Prostate gland (tissue), 2 donors: ENCODE measurements at regions of chr2 and their contacts with region 1.

Region 1: GRCh38 chr2:114550895-114551793 is 108.7 kb downstream of the DPP10 start:
- DNase-seq: peak; percentile 15
- H3K4me3 ChIP-seq: no peak overlapping the region
- H3K27ac ChIP-seq: no peak overlapping the region
- H3K4me1 ChIP-seq: no peaks in the 10 kb centered on the region
- H3K27me3 ChIP-seq: no peaks in the 10 kb centered on the region
- CTCF ChIP-seq: peak in 3 of 4 experiments; percentile 21 to 48 (median 32)
- POLR2A ChIP-seq: no peak

Region 2: GRCh38 chr2:113977660-113978523 is 573.3 kb before region 1 on chr2:
- intact Hi-C with region 1: loop called (anchors 10 kb)
- DNase-seq: no peak
- H3K4me3 ChIP-seq: no peak overlapping the region
- H3K27ac ChIP-seq: no peak overlapping the region
- H3K4me1 ChIP-seq: no peaks in the 10 kb centered on the region
- H3K27me3 ChIP-seq: no peaks in the 10 kb centered on the region
- CTCF ChIP-seq: peak in 1 of 4 experiments; percentile 22
- POLR2A ChIP-seq: no peak

Region 3: GRCh38 chr2:114405247-114406116 is 145.7 kb before region 1 on chr2:
- intact Hi-C with region 1: no loop called
- DNase-seq: no peak
- H3K4me3 ChIP-seq: no peak overlapping the region
- H3K27ac ChIP-seq: no peak overlapping the region
- H3K4me1 ChIP-seq: no peaks in the 10 kb centered on the region
- H3K27me3 ChIP-seq: no peaks in the 10 kb centered on the region
- CTCF ChIP-seq: no peak
- POLR2A ChIP-seq: no peak

Region 4: GRCh38 chr2:114488841-114489530 is 62.2 kb before region 1 on chr2:
- intact Hi-C with region 1: no loop called
- DNase-seq: no peak
- H3K4me3 ChIP-seq: no peak overlapping the region
- H3K27ac ChIP-seq: no peak overlapping the region
- H3K4me1 ChIP-seq: no peaks in the 10 kb centered on the region
- H3K27me3 ChIP-seq: no peaks in the 10 kb centered on the region
- CTCF ChIP-seq: no peak
- POLR2A ChIP-seq: no peak